H1 (cell line): ENCODE measurements at regions of chr21 and their contacts with region 1.

Region 1: GRCh38 chr21:29024474-29025327 is at the start of gene USP16:
- DNase-seq: peak; percentile 81 to 98
- H3K4me3 ChIP-seq: peak within 1 kb of the TSS; percentile 85 to 99 (median 96)
- H3K27ac ChIP-seq: peak within 1 kb of the TSS; percentile 99
- H3K4me1 ChIP-seq: no peaks in the 10 kb centered on the region
- H3K27me3 ChIP-seq: no peaks in the 10 kb centered on the region
- CTCF ChIP-seq: peak in 1 of 3 experiments; percentile 3; a peak in 1 of 4 replicates
- EP300 ChIP-seq: peak in 1 of 2 experiments; percentile 48; a peak in 1 of 3 replicates
- POLR2A ChIP-seq: peak; percentile 73 to 96
- RAD21 ChIP-seq: no peak
- total RNA-seq, gene USP16: 19.1 and 19.9 TPM in 2 replicates

Region 2: DNA sequence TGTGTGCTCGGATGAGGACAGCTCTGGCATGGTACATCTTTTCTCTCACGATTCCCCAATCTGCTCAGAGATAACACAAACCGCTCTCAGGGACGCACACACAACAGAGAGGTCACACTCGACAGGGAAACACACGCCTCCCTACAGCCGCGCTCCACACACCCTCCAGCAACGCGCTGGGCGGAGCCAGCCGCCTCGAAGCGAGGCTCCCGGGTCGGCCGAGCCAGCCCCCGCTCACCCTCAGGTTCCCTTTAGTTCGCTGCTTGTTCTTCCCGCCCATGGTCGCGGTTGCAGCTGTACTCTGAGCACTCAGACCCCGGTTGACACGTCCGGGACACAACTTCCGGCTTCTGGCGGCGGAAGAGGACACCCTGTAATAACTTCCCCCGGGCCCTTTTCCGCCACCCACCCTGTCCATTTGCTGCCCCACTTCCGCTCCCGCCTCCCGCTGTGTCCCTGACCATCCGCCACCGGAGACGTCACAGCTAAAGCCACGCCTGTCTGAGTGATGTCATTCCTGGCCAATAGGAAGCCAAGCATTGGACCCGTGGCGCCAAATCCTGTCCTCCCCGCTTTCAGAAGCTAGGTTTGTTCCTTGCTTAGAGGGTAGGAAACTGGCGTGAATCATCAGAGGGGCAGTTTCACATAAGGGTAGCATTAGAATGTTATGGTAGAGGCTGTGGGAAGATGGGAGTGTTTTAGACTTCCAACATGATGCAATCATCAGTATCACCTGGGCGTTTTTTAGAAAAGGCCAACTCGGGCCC is 32.0 kb before region 1 on chr21 and contains the start of gene LTN1:
- CTCF ChIA-PET with region 1: no interaction called
- POLR2A ChIA-PET with region 1: interaction called, 28 read pairs
- DNase-seq: peak; percentile 96 to 97
- H3K4me3 ChIP-seq: peak within 1 kb of the TSS; percentile 86 to 98 (median 94)
- H3K27ac ChIP-seq: peak within 1 kb of the TSS; percentile 81
- H3K4me1 ChIP-seq: peaks cover 0 to 4% (median 1%) of the 10 kb centered on the region in 4 experiments; a peak in 3 of 7 replicates
- H3K27me3 ChIP-seq: no peaks in the 10 kb centered on the region
- CTCF ChIP-seq: no peak
- EP300 ChIP-seq: peak in 1 of 2 experiments; percentile 34; a peak in 1 of 3 replicates
- POLR2A ChIP-seq: peak; percentile 59 to 95
- RAD21 ChIP-seq: no peak
- total RNA-seq, gene LTN1: 21.5 and 23.5 TPM in 2 replicates

Region 3: GRCh38 chr21:29002442-29003144 is 22.1 kb before region 1 on chr21:
- CTCF ChIA-PET with region 1: interaction called, 5 read pairs
- POLR2A ChIA-PET with region 1: interaction called, 21 read pairs
- DNase-seq: peak; percentile 87 to 91
- H3K4me3 ChIP-seq: peak overlapping the region; percentile 67 to 98 (median 90)
- H3K27ac ChIP-seq: peak overlapping the region; percentile 80
- H3K4me1 ChIP-seq: no peaks in the 10 kb centered on the region; a peak in 1 of 7 replicates
- H3K27me3 ChIP-seq: no peaks in the 10 kb centered on the region
- CTCF ChIP-seq: peak in 1 of 3 experiments; percentile 1; a peak in 1 of 4 replicates
- EP300 ChIP-seq: no peak
- POLR2A ChIP-seq: peak; percentile 87 to 98
- RAD21 ChIP-seq: no peak

Region 4: DNA sequence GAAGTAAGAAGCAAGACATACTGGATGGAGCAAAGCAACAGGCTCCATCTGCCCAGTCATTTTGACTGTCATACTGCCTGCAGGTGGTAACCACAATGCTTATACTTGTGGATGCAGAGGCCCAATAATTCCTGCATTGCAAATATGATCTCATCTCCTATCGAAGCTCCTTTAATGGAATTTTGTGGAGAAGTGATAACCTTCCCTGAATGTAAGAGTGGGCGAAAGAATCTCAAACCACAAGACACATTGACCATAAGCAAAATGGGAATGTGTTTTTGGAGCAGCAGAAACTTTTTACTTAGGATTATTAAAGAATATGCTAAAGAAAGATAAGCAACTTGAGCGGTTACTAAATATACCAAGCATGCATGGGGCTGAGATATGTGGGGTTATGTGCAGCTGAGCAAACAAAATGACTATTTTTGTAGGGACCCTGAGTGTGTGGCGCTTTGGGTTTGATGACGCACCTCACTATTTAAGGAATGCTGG is 196.6 kb after region 1 on chr21:
- CTCF ChIA-PET with region 1: no interaction called
- POLR2A ChIA-PET with region 1: no interaction called
- DNase-seq: no peak
- H3K4me3 ChIP-seq: no peak overlapping the region
- H3K27ac ChIP-seq: no peak overlapping the region
- H3K4me1 ChIP-seq: no peaks in the 10 kb centered on the region
- H3K27me3 ChIP-seq: no peaks in the 10 kb centered on the region
- CTCF ChIP-seq: no peak
- EP300 ChIP-seq: no peak
- POLR2A ChIP-seq: no peak
- RAD21 ChIP-seq: no peak